ENCODE measurements at regions of chr12 and their contacts with region 1.

Region 1: DNA sequence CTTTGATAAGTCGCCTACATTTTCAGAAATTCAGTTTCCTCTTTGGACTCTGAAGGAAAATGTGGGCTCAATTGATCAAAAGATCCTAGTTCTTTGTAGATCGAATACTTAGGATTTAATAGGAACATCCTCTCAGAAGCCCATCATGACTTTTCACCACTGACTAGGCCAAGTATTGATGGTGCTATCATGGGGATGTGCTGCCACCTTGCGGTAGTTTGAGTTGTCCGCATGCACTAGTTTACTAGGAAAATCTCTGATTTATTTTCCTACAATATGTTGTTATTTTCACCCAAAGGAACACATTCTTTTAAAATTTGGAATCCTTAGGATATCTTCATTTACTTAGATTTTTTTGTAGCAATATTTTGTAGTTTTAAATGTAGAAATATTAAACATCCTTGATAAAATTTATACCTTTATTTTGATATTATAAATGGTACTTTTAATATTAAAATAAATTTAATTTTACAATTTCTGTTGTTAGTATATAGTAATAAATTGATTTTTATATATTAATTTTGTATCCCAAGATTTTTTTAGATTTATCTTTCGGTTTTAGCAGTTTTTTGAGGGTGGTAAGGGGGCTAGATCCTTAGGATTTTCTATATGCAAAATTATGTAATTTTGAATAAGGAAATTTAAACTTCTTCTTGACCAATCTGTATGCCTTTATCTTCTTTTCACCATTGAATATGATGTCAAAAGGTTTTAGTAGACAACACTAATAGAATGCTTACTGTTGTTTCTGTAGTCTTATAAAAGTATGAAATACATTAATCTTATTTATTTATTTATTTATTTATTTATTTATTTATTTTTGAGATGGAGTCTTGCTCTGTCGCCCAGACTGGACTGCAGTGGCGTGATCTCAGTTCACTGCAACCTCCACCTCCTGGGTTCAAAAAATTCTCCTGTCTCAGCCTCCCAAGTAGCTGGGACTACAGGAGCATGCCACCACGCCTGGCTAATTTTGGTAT is 52.9 kb upstream of the OR9K2 start:
- DNase-seq: peak; percentile 44 to 93 (median 74)
- ATAC-seq: peak; percentile 63 to 72 (median 64)
- H3K4me3 ChIP-seq: no peak overlapping the region
- H3K4me3 Mint-ChIP-seq: no peak overlapping the region
- H3K27ac ChIP-seq: no peak overlapping the region
- H3K27ac Mint-ChIP-seq: peak overlapping the region in 1 of 2 donors; percentile 27
- H3K4me1 ChIP-seq: no peaks in the 10 kb centered on the region
- H3K4me1 Mint-ChIP-seq: peaks cover 4 to 11% (median 5%) of the 10 kb centered on the region in 3 donors
- H3K27me3 ChIP-seq: peaks cover 0 to 6% of the 10 kb centered on the region in 2 experiments
- H3K27me3 Mint-ChIP-seq: peaks cover 20 to 26% of the 10 kb centered on the region in 2 donors

Region 2: GRCh38 chr12:54749191-54749818 is 324.0 kb before region 1 on chr12:
- CTCF ChIA-PET with region 1: interaction called, 32 to 84 read pairs
- POLR2A ChIA-PET with region 1: no interaction called
- DNase-seq: peak in 25 of 35 experiments; percentile 7 to 84 (median 23)
- ATAC-seq: peak; percentile 62 to 69 (median 66)
- H3K4me3 ChIP-seq: no peak overlapping the region
- H3K4me3 Mint-ChIP-seq: peak overlapping the region in 2 of 3 donors; percentile 16 to 17
- H3K27ac ChIP-seq: no peak overlapping the region
- H3K27ac Mint-ChIP-seq: peak overlapping the region; percentile 23 to 44
- H3K4me1 ChIP-seq: peaks cover 7 to 15% of the 10 kb centered on the region in 2 experiments
- H3K4me1 Mint-ChIP-seq: peaks cover 20 to 28% (median 25%) of the 10 kb centered on the region in 3 donors
- H3K27me3 ChIP-seq: no peaks in the 10 kb centered on the region
- H3K27me3 Mint-ChIP-seq: no peaks in the 10 kb centered on the region

Region 3: GRCh38 chr12:54853995-54854566 is 219.3 kb before region 1 on chr12 and contains the start of gene MUCL1:
- CTCF ChIA-PET with region 1: interaction called, 6 to 12 read pairs
- POLR2A ChIA-PET with region 1: no interaction called
- DNase-seq: peak; percentile 24 to 84 (median 58)
- ATAC-seq: peak; percentile 97 to 100 (median 98)
- H3K4me3 ChIP-seq: no peak within 1 kb of the TSS
- H3K4me3 Mint-ChIP-seq: no peak within 1 kb of the TSS
- H3K27ac ChIP-seq: no peak within 1 kb of the TSS
- H3K27ac Mint-ChIP-seq: no peak within 1 kb of the TSS
- H3K4me1 ChIP-seq: no peaks in the 10 kb centered on the region
- H3K4me1 Mint-ChIP-seq: peaks cover 2 to 5% (median 2%) of the 10 kb centered on the region in 3 donors
- H3K27me3 ChIP-seq: no peaks in the 10 kb centered on the region
- H3K27me3 Mint-ChIP-seq: peaks cover 0 to 4% of the 10 kb centered on the region in 2 donors
- total RNA-seq, gene MUCL1: not detected

Region 4: DNA sequence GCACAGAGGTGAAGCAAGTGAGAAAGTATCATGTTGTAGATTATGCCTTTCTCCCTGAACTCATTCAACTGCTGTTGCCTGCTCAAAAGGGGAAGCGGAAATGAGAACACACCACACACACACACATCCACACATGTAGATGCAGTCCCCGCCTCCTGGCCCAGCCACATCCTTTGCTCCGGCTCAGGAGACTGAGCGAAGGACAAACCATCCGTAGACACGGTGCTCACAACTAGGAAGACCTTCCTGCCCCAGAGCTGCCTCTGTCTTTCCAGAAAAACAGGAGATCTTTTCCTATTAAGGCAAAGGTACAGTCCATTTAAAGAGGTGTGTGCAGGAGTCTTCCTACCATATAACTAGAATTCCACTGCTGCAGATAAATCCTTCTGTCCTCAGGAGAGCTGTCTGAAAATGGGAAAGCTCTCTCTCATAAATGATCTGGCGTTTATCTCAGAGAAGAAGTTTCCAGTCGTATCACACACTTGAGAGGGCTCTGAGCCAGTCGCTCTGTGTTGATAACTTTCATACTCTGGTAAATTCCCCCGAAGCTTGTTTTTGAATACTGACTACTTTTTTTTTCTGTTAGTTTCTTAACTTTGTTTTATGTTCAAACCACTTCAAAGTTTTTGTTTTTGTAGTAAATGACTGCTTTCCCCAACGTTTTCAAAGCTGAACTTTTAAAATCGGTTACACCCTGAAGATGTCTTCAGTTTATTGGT is 88.5 kb before region 1 on chr12 and contains the start of gene TESPA1:
- CTCF ChIA-PET with region 1: interaction called, 7 to 21 read pairs
- POLR2A ChIA-PET with region 1: no interaction called
- DNase-seq: peak; percentile 67 to 93 (median 88)
- ATAC-seq: peak; percentile 86 to 90 (median 88)
- H3K4me3 ChIP-seq: peak within 1 kb of the TSS; percentile 69 to 80
- H3K4me3 Mint-ChIP-seq: peak within 1 kb of the TSS; percentile 90 to 92 (median 91)
- H3K27ac ChIP-seq: peak within 1 kb of the TSS; percentile 94
- H3K27ac Mint-ChIP-seq: peak within 1 kb of the TSS; percentile 92 to 98
- H3K4me1 ChIP-seq: peaks cover 36 to 60% of the 10 kb centered on the region in 2 experiments
- H3K4me1 Mint-ChIP-seq: peaks cover 75 to 92% (median 87%) of the 10 kb centered on the region in 3 donors
- H3K27me3 ChIP-seq: no peaks in the 10 kb centered on the region
- H3K27me3 Mint-ChIP-seq: no peaks in the 10 kb centered on the region
- total RNA-seq, gene TESPA1: 141 to 215 (median 170) TPM

Region 5: GRCh38 chr12:54998958-54999510 is 74.3 kb before region 1 on chr12:
- CTCF ChIA-PET with region 1: interaction called, 94 to 351 read pairs
- POLR2A ChIA-PET with region 1: no interaction called
- DNase-seq: no peak
- ATAC-seq: no peak
- H3K4me3 ChIP-seq: no peak overlapping the region
- H3K4me3 Mint-ChIP-seq: no peak overlapping the region
- H3K27ac ChIP-seq: no peak overlapping the region
- H3K27ac Mint-ChIP-seq: peak overlapping the region in 1 of 2 donors; percentile 25
- H3K4me1 ChIP-seq: peaks cover 5% of the 10 kb centered on the region in 2 experiments
- H3K4me1 Mint-ChIP-seq: peaks cover 14 to 24% (median 17%) of the 10 kb centered on the region in 3 donors
- H3K27me3 ChIP-seq: no peaks in the 10 kb centered on the region
- H3K27me3 Mint-ChIP-seq: no peaks in the 10 kb centered on the region

Region 6: GRCh38 chr12:55132816-55133215 is 59.5 kb after region 1 on chr12:
- CTCF ChIA-PET with region 1: no interaction called
- POLR2A ChIA-PET with region 1: no interaction called
- DNase-seq: no peak
- ATAC-seq: no peak
- H3K4me3 ChIP-seq: no peak overlapping the region
- H3K4me3 Mint-ChIP-seq: no peak overlapping the region
- H3K27ac ChIP-seq: no peak overlapping the region
- H3K27ac Mint-ChIP-seq: no peak overlapping the region
- H3K4me1 ChIP-seq: no peaks in the 10 kb centered on the region
- H3K4me1 Mint-ChIP-seq: no peaks in the 10 kb centered on the region
- H3K27me3 ChIP-seq: peaks cover 5 to 8% of the 10 kb centered on the region in 2 experiments
- H3K27me3 Mint-ChIP-seq: peaks cover 39 to 47% of the 10 kb centered on the region in 2 donors

Region 7: GRCh38 chr12:55336002-55336401 is 262.7 kb after region 1 on chr12:
- CTCF ChIA-PET with region 1: no interaction called
- POLR2A ChIA-PET with region 1: no interaction called
- DNase-seq: no peak
- ATAC-seq: no peak
- H3K4me3 ChIP-seq: no peak overlapping the region
- H3K4me3 Mint-ChIP-seq: no peak overlapping the region
- H3K27ac ChIP-seq: no peak overlapping the region
- H3K27ac Mint-ChIP-seq: no peak overlapping the region
- H3K4me1 ChIP-seq: no peaks in the 10 kb centered on the region
- H3K4me1 Mint-ChIP-seq: no peaks in the 10 kb centered on the region
- H3K27me3 ChIP-seq: peaks cover 0 to 4% of the 10 kb centered on the region in 2 experiments
- H3K27me3 Mint-ChIP-seq: peaks cover 21 to 38% of the 10 kb centered on the region in 2 donors

Region 8: GRCh38 chr12:55385911-55386310 is 312.6 kb after region 1 on chr12:
- CTCF ChIA-PET with region 1: no interaction called
- POLR2A ChIA-PET with region 1: no interaction called
- DNase-seq: no peak
- ATAC-seq: no peak
- H3K4me3 ChIP-seq: no peak overlapping the region
- H3K4me3 Mint-ChIP-seq: no peak overlapping the region
- H3K27ac ChIP-seq: no peak overlapping the region
- H3K27ac Mint-ChIP-seq: no peak overlapping the region
- H3K4me1 ChIP-seq: no peaks in the 10 kb centered on the region
- H3K4me1 Mint-ChIP-seq: no peaks in the 10 kb centered on the region
- H3K27me3 ChIP-seq: no peaks in the 10 kb centered on the region
- H3K27me3 Mint-ChIP-seq: peaks cover 3 to 27% of the 10 kb centered on the region in 2 donors

Measured in T-cell (primary cell).